Activated T-helper 1 cell treated with anti-CD3 and anti-CD28 coated beads, Interleukin-12 subunit alpha, Interleukin-12 subunit beta, Interleukin-2, Interleukin-4 antibody, amounts not matched to agents 30 ng/mL and 10 ng/mL and 1 ng/mL, durations not matched to agents 14 hours and 24 hours and 36 hours (primary cell): ENCODE measurements at regions of chr2 and their contacts with region 1.

Region 1: GRCh38 chr2:178478439-178479274 is at the start of gene FKBP7:
- DNase-seq: peak; percentile 75
- H3K4me3 Mint-ChIP-seq: peak within 1 kb of the TSS; percentile 95
- H3K27ac Mint-ChIP-seq: peak within 1 kb of the TSS; percentile 99
- H3K4me1 Mint-ChIP-seq: peaks cover 39% of the 10 kb centered on the region
- H3K27me3 Mint-ChIP-seq: no peaks in the 10 kb centered on the region
- total RNA-seq, gene FKBP7: 2.9 and 4.5 TPM in 2 replicates

Region 2: DNA sequence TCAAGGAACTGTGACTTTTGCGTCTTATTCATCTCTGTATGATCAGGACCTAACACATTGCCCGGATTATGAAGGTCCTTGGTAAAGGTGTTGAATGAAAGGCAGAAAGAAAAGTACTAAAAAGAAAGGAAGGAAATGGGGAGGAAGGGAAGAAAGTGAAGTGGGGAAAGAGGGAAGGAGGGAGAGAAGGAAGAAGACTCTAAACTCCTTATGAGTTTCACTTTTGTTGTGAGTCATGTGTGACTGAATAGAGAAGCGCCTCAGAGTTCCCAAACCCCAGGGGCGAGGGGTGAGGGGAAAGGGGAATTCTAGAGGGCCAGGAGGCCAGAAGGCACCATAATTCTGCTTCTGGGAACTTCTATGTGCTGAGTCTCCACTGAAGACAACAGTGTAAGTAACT is 315.3 kb before region 1 on chr2:
- intact Hi-C with region 1: no loop called
- DNase-seq: no peak
- H3K4me3 Mint-ChIP-seq: no peak overlapping the region
- H3K27ac Mint-ChIP-seq: no peak overlapping the region
- H3K4me1 Mint-ChIP-seq: no peaks in the 10 kb centered on the region
- H3K27me3 Mint-ChIP-seq: peaks cover 9% of the 10 kb centered on the region

Region 3: GRCh38 chr2:178193823-178194599 is 284.6 kb before region 1 on chr2 and contains the start of gene OSBPL6:
- intact Hi-C with region 1: loop called (anchors 2 kb)
- DNase-seq: peak; percentile 75
- H3K4me3 Mint-ChIP-seq: peak within 1 kb of the TSS; percentile 80
- H3K27ac Mint-ChIP-seq: no peak within 1 kb of the TSS
- H3K4me1 Mint-ChIP-seq: peaks cover 11% of the 10 kb centered on the region
- H3K27me3 Mint-ChIP-seq: peaks cover 57% of the 10 kb centered on the region
- total RNA-seq, gene OSBPL6: 1.5 and 1.9 TPM in 2 replicates

Region 4: GRCh38 chr2:178514664-178515063 is 36.0 kb after region 1 on chr2:
- intact Hi-C with region 1: loop called (anchors 1 kb)
- DNase-seq: peak; percentile 17
- H3K4me3 Mint-ChIP-seq: peak overlapping the region; percentile 30
- H3K27ac Mint-ChIP-seq: peak overlapping the region; percentile 82
- H3K4me1 Mint-ChIP-seq: peaks cover 27% of the 10 kb centered on the region
- H3K27me3 Mint-ChIP-seq: no peaks in the 10 kb centered on the region

Region 5: GRCh38 chr2:178522950-178523595 is 44.4 kb after region 1 on chr2:
- intact Hi-C with region 1: loop called (anchors 1 kb)
- DNase-seq: peak; percentile 80
- H3K4me3 Mint-ChIP-seq: peak overlapping the region; percentile 99
- H3K27ac Mint-ChIP-seq: peak overlapping the region; percentile 92
- H3K4me1 Mint-ChIP-seq: peaks cover 42% of the 10 kb centered on the region
- H3K27me3 Mint-ChIP-seq: no peaks in the 10 kb centered on the region

Region 6: GRCh38 chr2:178530625-178531142 is 52.0 kb after region 1 on chr2:
- intact Hi-C with region 1: loop called (anchors 2 kb)
- DNase-seq: peak; percentile 44
- H3K4me3 Mint-ChIP-seq: peak overlapping the region; percentile 1
- H3K27ac Mint-ChIP-seq: peak overlapping the region; percentile 60
- H3K4me1 Mint-ChIP-seq: peaks cover 43% of the 10 kb centered on the region
- H3K27me3 Mint-ChIP-seq: no peaks in the 10 kb centered on the region

Region 7: DNA sequence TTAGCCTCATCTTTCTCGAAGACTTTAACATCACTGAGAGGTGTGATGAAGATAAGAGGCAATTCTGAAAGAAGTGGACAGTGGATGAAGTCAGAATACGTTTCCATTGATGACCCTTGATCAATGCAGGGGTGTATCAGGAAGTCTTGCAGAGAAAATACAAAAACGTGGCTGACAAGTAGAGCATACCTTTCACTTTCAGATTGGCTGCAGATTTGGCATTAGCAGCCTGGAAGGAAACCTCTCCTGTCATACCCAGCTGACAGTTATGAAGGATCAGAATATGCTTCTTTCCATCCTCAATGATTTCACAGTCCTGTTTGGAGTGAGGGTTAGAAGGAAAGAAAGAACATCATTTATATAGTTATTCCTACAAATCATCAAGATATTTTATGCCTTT is 154.1 kb after region 1 on chr2:
- intact Hi-C with region 1: loop called (anchors 10 kb)
- DNase-seq: no peak
- H3K4me3 Mint-ChIP-seq: no peak overlapping the region
- H3K27ac Mint-ChIP-seq: no peak overlapping the region
- H3K4me1 Mint-ChIP-seq: no peaks in the 10 kb centered on the region
- H3K27me3 Mint-ChIP-seq: no peaks in the 10 kb centered on the region

Region 8: DNA sequence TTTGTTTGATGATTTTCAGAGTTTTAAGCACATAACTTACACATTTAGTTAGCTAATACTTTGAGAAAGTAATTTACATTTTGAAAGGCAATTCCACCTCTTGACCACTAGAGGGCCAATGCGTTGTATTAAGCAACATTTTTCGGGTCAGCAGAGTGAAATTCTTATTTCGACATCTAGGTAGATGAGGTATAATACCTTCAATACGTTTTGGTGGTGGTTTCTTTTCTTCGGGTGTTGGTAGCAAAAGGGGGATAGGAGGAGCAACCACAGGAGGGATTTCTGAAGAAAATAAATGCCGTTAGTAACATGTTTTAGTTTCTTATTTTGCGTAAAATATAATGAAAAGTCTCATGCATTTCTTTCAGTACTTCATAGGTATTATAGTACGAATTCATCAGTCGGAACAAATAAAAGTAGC is 222.3 kb after region 1 on chr2:
- intact Hi-C with region 1: loop called (anchors 2 kb)
- DNase-seq: no peak
- H3K4me3 Mint-ChIP-seq: no peak overlapping the region
- H3K27ac Mint-ChIP-seq: no peak overlapping the region
- H3K4me1 Mint-ChIP-seq: peaks cover 5% of the 10 kb centered on the region
- H3K27me3 Mint-ChIP-seq: peaks cover 3% of the 10 kb centered on the region